Esophagus muscularis mucosa (tissue), 4 donors: ENCODE measurements at regions of chr12 and their contacts with region 1.

Region 1: GRCh38 chr12:91178139-91178561 is 4.5 kb downstream of the DCN start:
- DNase-seq: no peak
- H3K4me3 ChIP-seq: peak overlapping the region; percentile 41 to 57 (median 48)
- H3K27ac ChIP-seq: peak overlapping the region; percentile 61 to 71 (median 69)
- H3K4me1 ChIP-seq: peaks cover 0 to 19% (median 8%) of the 10 kb centered on the region in 4 donors
- H3K27me3 ChIP-seq: no peaks in the 10 kb centered on the region
- CTCF ChIP-seq: peak; percentile 35 to 60 (median 47)
- EP300 ChIP-seq: no peak
- POLR2A ChIP-seq: no peak

Region 2: DNA sequence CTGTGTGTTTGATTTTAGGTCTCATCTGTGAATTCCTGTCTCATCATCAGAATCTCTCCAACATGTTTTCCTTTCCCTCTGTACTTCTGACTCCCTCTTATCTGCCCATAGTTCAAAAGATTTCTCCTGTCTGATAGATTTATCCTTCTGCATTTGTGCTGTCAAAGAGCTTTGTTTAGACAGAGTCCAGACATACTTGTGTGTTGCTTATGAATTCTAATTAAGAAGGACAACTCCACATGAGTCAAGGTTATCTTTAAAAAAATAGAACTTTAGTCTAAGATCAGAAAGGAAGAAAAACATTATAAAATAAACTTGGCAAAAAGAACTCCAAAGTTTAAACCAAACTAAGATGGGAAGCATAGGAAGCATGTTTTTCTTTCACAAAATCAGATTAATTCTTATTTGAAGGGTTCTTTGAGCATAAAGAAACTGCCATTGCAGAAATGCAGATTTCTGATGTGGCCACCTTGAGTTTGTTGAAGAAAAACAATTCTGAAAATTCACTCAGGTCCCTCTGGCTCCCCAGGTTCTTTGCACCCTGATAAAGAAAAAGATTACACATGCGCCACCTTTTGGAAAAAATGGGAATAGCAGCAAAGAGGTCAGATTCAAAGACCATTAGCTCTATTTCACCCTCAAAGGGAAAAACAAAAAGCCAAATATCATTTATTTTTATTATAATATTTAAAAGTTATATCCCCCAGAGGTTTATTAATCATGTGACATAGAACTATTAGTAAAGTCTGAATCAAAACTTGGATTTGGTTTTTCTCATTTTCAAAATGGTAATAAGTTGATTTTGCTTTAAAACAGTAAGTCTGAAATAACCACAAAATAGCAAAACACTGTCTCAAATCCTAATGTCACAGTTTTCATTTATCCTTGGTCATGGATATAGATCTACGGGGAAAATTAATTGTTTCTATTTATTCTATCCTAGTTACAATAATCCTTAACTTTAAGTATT is 148.2 kb after region 1 on chr12:
- intact Hi-C with region 1: loop called (anchors 5 kb)
- DNase-seq: no peak
- H3K4me3 ChIP-seq: peak overlapping the region in 1 of 4 donors; percentile 3
- H3K27ac ChIP-seq: peak overlapping the region in 3 of 4 donors; percentile 21 to 39 (median 22)
- H3K4me1 ChIP-seq: peaks cover 0 to 9% (median 2%) of the 10 kb centered on the region in 4 donors
- H3K27me3 ChIP-seq: no peaks in the 10 kb centered on the region
- CTCF ChIP-seq: peak; percentile 70 to 81 (median 78)
- EP300 ChIP-seq: no peak
- POLR2A ChIP-seq: no peak

Region 3: DNA sequence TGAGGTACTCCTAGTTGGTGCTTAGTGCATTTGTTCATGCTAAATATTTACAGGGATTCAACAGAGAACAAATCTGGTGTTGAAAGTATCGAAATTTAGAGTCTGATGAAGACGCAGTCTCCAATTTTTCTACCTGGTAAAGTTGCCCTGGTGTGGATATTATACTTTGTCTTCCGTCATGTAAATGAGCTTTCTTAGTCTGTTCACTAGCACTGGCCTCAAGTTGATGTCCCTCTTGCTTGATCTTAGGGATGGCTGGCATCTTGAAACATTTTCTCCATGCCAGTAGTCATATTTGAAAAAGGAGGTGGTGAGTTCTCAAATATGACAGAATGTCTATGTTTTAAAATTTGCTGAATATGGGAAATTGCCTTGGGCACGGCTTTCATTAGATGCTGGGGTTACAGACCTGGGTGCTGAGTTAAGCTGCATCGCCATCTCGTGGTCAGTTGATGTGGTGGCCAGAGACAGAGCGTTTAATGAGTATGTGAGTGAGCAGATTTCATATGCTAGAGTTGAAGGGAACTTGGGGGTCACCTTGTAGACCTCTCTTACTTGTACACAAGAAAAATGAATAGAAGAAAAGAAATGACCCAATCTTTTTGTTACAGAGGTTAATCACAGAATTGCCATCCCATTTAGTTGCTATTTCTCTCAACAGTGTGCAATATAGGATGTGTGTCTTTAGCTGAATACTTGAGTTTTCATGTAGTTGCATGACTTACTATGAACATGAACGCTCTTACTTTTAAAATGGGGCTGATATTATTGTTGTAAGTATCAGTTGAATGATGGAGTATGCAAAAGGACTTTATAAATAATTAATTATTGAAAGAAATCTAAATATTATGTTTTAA is 177.2 kb after region 1 on chr12:
- intact Hi-C with region 1: loop called (anchors 10 kb)
- DNase-seq: no peak
- H3K4me3 ChIP-seq: no peak overlapping the region
- H3K27ac ChIP-seq: no peak overlapping the region
- H3K4me1 ChIP-seq: no peaks in the 10 kb centered on the region
- H3K27me3 ChIP-seq: no peaks in the 10 kb centered on the region
- CTCF ChIP-seq: peak; percentile 80 to 84 (median 81)
- EP300 ChIP-seq: no peak
- POLR2A ChIP-seq: no peak